Left colon (tissue), 2 donors: ENCODE measurements at regions of chr9 and their contacts with region 1.

Region 1: GRCh38 chr9:84966876-84967833 is 297.6 kb downstream of the NTRK2 start:
- DNase-seq: no peak
- ATAC-seq: no peak

Region 2: GRCh38 chr9:84697509-84698114 is 269.5 kb before region 1 on chr9:
- intact Hi-C with region 1: loop called in 1 of 2 experiments (anchors 5 kb)
- DNase-seq: peak; percentile 65 to 90
- ATAC-seq: peak; percentile 98

Region 3: GRCh38 chr9:84932915-84933527 is 34.1 kb before region 1 on chr9:
- intact Hi-C with region 1: no loop called
- DNase-seq: no peak
- ATAC-seq: peak; percentile 64

Region 4: GRCh38 chr9:85155352-85155751 is 188.2 kb after region 1 on chr9:
- intact Hi-C with region 1: no loop called
- DNase-seq: no peak
- ATAC-seq: no peak

Region 5: GRCh38 chr9:85290019-85290418 is 322.9 kb after region 1 on chr9:
- intact Hi-C with region 1: no loop called
- DNase-seq: no peak
- ATAC-seq: no peak